Astrocyte of the cerebellum (primary cell): ENCODE measurements at regions of chr18 and their contacts with region 1.

Region 1: DNA sequence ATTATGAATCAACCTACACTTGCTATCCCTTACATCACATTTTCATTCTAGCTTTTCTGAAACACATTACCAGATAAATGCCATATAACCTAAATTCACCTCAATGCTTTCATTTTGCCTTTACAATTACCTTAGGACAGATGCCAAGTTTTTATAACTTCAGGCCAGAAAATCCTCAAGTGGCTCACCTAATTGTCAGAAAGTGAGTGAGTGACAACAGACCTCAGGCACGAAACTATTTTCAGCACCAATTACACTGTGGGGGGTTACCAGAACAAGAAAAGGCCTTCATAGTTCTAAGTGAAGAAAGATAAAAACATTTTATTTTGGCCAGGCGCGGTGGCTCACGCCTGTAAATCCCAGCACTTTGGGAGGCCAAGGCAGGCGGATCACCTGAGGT is 52.3 kb upstream of the ST8SIA5 start:
- DNase-seq: no peak
- H3K4me3 ChIP-seq: no peak overlapping the region
- CTCF ChIP-seq: no peak

Region 2: DNA sequence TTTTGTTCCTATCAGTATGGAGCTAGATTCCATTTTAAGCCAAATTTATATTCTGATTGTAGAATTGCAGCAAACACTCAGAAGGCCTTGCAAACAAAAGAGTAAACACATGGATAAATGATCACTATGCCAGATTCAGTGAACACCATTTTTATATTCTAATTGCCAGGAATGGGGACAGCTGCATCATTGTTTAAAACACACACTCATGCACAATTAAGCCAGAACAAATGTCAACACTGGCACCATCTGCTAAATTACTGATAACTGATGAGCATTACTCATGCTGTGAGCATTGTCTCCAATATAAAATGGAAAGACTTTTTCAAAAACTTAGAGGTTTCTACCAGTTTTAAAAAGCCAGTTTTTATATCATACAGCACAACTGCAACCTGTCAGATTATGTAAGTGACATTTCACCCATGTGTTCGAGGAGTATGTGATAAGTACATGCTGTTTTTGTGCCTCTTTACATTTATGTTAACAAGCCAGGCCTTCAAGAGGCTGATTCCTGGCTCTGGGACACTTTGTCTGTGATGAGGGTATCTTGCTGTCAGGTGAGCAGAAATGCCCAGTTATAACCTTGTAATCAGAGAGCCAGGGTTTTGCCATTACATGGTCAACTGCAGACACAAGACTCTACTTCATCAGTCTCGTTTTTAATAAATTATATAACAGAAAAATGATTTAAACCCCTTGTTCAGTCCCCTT is 47.9 kb before region 1 on chr18:
- in situ Hi-C with region 1: loop called (anchors 5 kb)
- DNase-seq: no peak
- H3K4me3 ChIP-seq: no peak overlapping the region
- CTCF ChIP-seq: no peak